Activated CD8-positive, alpha-beta T cell treated with anti-CD3 and anti-CD28 coated beads for 36 hours (primary cell): ENCODE measurements at regions of chr6 and their contacts with region 1.

Region 1: DNA sequence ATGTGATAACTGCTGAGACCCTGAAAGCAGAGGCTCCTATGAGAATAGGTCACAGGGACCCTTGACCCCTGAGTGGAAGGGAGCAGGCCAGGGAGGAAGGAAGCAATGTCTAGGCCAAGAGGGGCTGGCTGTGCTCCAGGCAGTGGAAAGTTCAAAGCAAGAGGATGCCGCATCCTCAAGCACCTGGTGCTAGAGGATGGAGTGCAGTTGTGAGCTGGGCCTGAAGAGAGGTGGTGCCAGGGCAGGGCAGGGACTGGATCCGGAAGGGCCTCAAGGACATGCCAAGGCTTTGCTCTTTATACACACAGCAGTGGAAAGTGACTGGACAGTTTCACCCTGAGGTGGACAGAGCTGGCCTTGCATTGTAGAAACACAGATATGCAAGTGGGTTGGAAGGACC is 97.0 kb downstream of the SLC22A3 start:
- DNase-seq: no peak
- ATAC-seq: no peak
- H3K4me3 Mint-ChIP-seq: no peak overlapping the region
- H3K27ac Mint-ChIP-seq: no peak overlapping the region
- H3K4me1 Mint-ChIP-seq: peaks cover 2% of the 10 kb centered on the region
- H3K27me3 Mint-ChIP-seq: peaks cover 28% of the 10 kb centered on the region
- CTCF ChIP-seq: no peak

Region 2: DNA sequence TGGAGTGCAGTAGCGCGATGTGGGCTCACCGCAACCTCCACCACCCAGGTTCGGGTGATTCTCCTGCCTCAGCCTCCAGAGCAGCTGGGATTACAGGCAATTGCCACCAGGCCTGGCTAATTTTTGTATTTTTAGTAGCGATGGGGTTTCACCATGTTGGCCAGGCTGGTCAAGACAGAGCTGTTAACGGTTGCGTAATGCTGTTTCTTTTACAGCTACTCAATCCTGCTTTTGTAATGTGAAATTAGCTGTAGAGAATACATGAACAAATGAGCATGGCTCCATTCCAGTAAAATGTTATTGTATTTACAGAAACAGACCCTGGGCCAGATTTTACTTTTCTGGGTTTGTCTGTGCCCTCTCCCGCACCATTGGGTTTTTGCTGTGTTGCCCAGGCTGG is 643.2 kb before region 1 on chr6:
- CTCF ChIA-PET with region 1: no interaction called
- POLR2A ChIA-PET with region 1: no interaction called
- intact Hi-C with region 1: loop called (anchors 5 kb)
- DNase-seq: no peak
- ATAC-seq: no peak
- H3K4me3 Mint-ChIP-seq: no peak overlapping the region
- H3K27ac Mint-ChIP-seq: no peak overlapping the region
- H3K4me1 Mint-ChIP-seq: peaks cover 12% of the 10 kb centered on the region
- H3K27me3 Mint-ChIP-seq: no peaks in the 10 kb centered on the region
- CTCF ChIP-seq: no peak